Activated B cell treated with CpG ODN at 0.5 μM for 24 hours (primary cell): ENCODE measurements at regions of chr14 and their contacts with region 1.

Region 1: GRCh38 chr14:30257946-30258657 is 300.9 kb upstream of the G2E3 start:
- DNase-seq: no peak
- ATAC-seq: no peak
- H3K4me3 Mint-ChIP-seq: no peak overlapping the region
- H3K27ac Mint-ChIP-seq: no peak overlapping the region
- H3K4me1 Mint-ChIP-seq: no peaks in the 10 kb centered on the region
- H3K27me3 Mint-ChIP-seq: no peaks in the 10 kb centered on the region
- CTCF ChIP-seq: no peak

Region 2: DNA sequence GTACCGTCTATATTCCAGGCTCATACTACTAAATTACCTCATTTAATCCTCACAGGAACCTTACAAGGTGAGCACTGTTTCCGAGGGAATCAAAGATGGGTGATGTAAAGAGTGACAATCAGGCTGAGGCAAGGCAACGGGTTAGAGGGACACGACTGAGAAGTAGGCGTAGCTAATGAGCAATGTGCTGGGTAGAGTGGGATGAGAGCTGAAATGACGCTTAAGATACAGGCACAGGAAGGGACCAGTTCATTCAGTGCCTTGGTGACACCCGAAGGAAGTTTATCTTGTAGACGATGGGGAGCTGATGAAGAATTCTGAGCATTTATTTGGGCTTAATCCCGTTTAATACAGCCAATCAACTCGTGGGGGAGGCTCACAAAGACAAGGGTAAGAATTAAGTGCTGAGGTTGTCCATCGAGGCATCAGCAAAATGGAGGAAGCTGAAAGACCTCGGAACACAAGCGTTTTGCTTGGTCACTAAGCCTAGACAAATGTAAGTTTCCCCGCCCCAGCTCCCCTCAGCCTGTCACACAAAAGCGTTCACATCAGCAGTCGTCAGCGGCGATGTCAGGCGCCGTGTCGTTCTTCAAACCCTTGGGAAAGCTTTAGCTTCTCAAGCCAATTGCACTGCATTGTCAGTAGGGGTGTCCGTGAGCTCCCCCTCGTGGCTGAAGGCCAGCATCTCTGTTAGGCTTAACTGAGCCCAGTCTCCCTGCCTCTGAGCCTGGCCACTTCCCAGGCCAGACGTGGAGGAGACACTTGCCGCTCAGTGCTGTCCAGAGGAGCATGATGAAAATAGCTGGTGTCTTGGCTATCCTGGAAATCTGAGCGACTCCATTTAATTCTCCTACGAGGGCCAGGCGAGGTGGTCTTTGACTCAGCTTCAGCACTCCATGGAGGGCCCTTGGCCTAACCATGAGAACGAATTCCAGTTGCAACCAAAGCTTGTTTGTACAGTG is 12.4 kb after region 1 on chr14:
- CTCF ChIA-PET with region 1: interaction called, 11 read pairs
- POLR2A ChIA-PET with region 1: no interaction called
- intact Hi-C with region 1: no loop called
- DNase-seq: peak; percentile 33
- ATAC-seq: peak; percentile 82
- H3K4me3 Mint-ChIP-seq: peak overlapping the region; percentile 24
- H3K27ac Mint-ChIP-seq: no peak overlapping the region
- H3K4me1 Mint-ChIP-seq: peaks cover 2% of the 10 kb centered on the region
- H3K27me3 Mint-ChIP-seq: peaks cover 6% of the 10 kb centered on the region
- CTCF ChIP-seq: no peak